Thyroid gland (tissue), 4 donors: ENCODE measurements at regions of chr9 and their contacts with region 1.

Region 1: DNA sequence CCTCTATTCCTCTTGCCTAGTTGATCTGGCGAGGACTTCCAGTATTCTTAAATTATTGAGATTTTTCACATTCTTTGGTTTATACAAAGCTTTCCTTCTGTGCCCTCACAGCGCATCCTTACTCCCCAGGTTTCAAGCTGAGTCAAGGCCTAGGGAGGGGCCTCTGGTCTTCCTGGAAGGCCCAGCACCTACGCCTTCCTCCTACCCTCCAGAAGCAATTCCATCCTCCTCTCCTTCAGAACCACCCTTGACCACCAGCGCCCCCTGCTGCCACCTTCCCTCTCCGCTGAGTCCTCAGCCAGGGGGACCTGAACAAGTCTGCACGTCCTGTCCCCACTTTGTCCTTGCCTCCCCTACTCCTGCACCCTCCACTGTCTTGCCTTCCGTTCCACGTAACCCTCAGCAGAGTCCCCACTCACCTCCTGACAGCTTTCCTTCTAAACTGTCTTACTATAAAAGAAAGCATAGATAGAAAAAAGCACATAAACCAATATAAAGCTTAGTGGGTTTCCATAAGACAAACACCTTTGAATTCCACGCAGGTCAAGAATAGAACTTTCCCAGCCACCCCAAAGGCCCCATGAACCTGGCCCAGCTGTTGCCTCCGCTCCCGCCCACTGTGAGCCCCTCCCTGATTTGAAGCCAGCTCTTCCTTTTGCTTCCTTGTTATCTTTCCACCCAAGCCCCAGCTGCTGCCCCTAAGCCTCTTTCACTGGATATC is 63.0 kb upstream of the CTSL start:
- DNase-seq: peak; percentile 76 to 85
- H3K4me3 ChIP-seq: no peak overlapping the region
- H3K27ac ChIP-seq: no peak overlapping the region
- H3K4me1 ChIP-seq: no peaks in the 10 kb centered on the region
- H3K27me3 ChIP-seq: no peaks in the 10 kb centered on the region
- CTCF ChIP-seq: peak; percentile 54 to 97 (median 82)
- POLR2A ChIP-seq: no peak

Region 2: GRCh38 chr9:87337335-87338082 is 325.5 kb before region 1 on chr9:
- intact Hi-C with region 1: loop called (anchors 2 kb)
- DNase-seq: no peak
- H3K4me3 ChIP-seq: peak overlapping the region in 1 of 3 donors; percentile 21
- H3K27ac ChIP-seq: no peak overlapping the region
- H3K4me1 ChIP-seq: peaks cover 0 to 8% of the 10 kb centered on the region in 2 donors
- H3K27me3 ChIP-seq: no peaks in the 10 kb centered on the region
- CTCF ChIP-seq: no peak
- POLR2A ChIP-seq: no peak

Region 3: DNA sequence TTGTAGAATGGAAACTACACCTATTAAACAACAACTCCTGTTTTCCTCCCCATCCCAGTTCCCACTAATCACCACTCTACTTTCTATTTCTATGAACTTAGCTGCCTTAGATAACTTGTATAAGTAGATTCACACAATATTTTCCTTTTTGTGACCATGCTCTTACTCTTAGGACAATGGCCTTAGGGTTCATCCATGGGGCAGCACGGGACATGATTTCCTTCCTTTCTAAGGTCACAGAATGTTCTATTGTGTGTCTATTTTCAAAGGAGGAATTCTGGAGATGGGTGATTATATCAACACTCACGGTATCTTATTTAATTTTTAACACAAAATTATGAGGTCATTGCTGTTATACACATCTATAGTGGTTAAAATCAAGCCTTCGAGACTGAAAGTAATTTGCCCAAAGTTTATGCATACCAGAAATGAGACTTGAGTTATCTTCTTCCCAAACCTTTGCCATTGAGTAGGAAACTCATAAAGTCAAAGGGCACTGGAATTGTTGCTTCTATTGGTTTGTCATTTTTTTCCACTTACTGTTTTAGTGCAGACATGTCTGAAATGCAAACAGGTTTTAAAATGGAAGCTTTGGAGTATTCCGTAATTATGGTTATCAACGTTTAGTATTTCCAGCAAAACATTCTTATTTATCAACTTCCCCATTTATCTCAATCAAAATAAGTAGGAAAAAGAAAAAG is 86.5 kb after region 1 on chr9:
- intact Hi-C with region 1: no loop called
- DNase-seq: no peak
- H3K4me3 ChIP-seq: no peak overlapping the region
- H3K27ac ChIP-seq: no peak overlapping the region
- H3K4me1 ChIP-seq: no peaks in the 10 kb centered on the region
- H3K27me3 ChIP-seq: no peaks in the 10 kb centered on the region
- CTCF ChIP-seq: no peak
- POLR2A ChIP-seq: no peak